ENCODE measurements at regions of chr9 and their contacts with region 1.

Region 1: DNA sequence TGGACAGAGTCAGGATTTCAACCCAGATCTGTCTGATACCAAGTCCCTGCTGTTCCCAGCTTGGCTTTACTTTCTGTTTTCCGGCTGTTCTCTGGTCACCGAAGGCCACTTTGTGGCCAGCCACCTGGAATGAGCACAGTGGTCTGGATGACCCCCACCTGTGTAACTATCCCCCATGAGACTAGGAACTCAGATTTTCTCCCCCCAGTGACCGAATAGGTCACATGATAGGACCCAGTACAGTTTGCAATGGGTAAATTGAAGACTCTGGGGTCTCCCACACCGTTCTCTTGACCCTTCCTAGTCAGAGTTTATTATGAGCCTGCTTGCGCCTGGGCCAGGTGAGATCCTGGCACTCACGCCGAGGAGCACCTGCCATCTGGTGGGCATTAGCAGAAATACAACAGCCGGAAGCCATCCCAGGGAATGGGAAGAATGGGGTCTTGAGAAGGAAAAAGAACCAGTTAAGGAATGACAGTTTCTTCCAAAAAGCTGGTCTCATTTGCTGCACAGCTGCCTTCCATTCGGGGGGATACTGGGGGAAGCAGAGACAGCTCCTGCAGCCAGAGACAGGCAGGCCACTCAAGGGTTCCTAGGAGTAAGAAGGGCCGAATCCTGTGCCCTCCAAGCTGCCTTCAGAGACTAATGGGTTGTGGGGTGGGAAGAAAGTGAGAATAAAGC is 7.1 kb downstream of the PHYHD1 start:
- DNase-seq: peak; percentile 65
- H3K4me3 Mint-ChIP-seq: no peak overlapping the region
- H3K27ac Mint-ChIP-seq: peak overlapping the region; percentile 75
- H3K4me1 Mint-ChIP-seq: peaks cover 7% of the 10 kb centered on the region
- H3K27me3 Mint-ChIP-seq: no peaks in the 10 kb centered on the region
- CTCF ChIP-seq: peak; percentile 87

Region 2: GRCh38 chr9:128845155-128845931 is 82.5 kb before region 1 on chr9:
- CTCF ChIA-PET with region 1: interaction called, 17 read pairs
- POLR2A ChIA-PET with region 1: interaction called, 4 read pairs
- intact Hi-C with region 1: no loop called
- DNase-seq: peak; percentile 55
- H3K4me3 Mint-ChIP-seq: no peak overlapping the region
- H3K27ac Mint-ChIP-seq: no peak overlapping the region
- H3K4me1 Mint-ChIP-seq: peaks cover 9% of the 10 kb centered on the region
- H3K27me3 Mint-ChIP-seq: no peaks in the 10 kb centered on the region
- CTCF ChIP-seq: no peak

Region 3: DNA sequence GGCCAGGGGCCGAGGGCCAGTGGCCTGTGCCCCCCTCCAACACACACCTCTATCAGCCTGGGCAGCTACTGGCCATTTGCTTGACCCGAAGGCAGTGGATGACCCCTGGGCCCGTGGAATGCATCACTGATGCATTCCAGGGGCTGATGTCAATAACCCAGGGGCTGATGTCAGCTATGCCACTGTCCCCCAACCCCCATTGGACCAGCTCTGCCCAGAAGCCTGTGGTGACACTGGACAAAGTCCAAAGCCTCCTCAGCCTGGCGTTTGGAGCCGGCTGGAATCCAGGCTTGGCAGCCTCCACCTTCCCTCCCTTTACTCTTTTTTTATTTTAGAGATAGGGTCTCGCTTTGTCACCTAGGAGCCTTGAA is 52.1 kb before region 1 on chr9:
- CTCF ChIA-PET with region 1: interaction called, 59 read pairs
- POLR2A ChIA-PET with region 1: interaction called, 3 read pairs
- intact Hi-C with region 1: no loop called
- DNase-seq: no peak
- H3K4me3 Mint-ChIP-seq: no peak overlapping the region
- H3K27ac Mint-ChIP-seq: no peak overlapping the region
- H3K4me1 Mint-ChIP-seq: peaks cover 23% of the 10 kb centered on the region
- H3K27me3 Mint-ChIP-seq: no peaks in the 10 kb centered on the region
- CTCF ChIP-seq: no peak

Region 4: GRCh38 chr9:128892317-128892921 is 35.5 kb before region 1 on chr9:
- CTCF ChIA-PET with region 1: interaction called, 14 read pairs
- POLR2A ChIA-PET with region 1: interaction called, 4 read pairs
- intact Hi-C with region 1: loop called (anchors 5 kb)
- DNase-seq: peak; percentile 97
- H3K4me3 Mint-ChIP-seq: peak overlapping the region; percentile 21
- H3K27ac Mint-ChIP-seq: peak overlapping the region; percentile 69
- H3K4me1 Mint-ChIP-seq: peaks cover 20% of the 10 kb centered on the region
- H3K27me3 Mint-ChIP-seq: no peaks in the 10 kb centered on the region
- CTCF ChIP-seq: no peak

Region 5: GRCh38 chr9:128947422-128948301 is 19.8 kb after region 1 on chr9 and contains the starts of genes DOLK and NUP188:
- CTCF ChIA-PET with region 1: interaction called, 32 read pairs
- POLR2A ChIA-PET with region 1: interaction called, 6 read pairs
- intact Hi-C with region 1: no loop called
- DNase-seq: peak; percentile 94
- H3K4me3 Mint-ChIP-seq: peak within 1 kb of the TSS; percentile 83
- H3K27ac Mint-ChIP-seq: peak within 1 kb of the TSS; percentile 90
- H3K4me1 Mint-ChIP-seq: peaks cover 17% of the 10 kb centered on the region
- H3K27me3 Mint-ChIP-seq: no peaks in the 10 kb centered on the region
- CTCF ChIP-seq: no peak
- total RNA-seq, gene DOLK: 12.0 and 16.9 TPM in 2 replicates
- total RNA-seq, gene NUP188: 47.3 and 54.9 TPM in 2 replicates